ENCODE measurements at regions of chr12 and their contacts with region 1.

Region 1: DNA sequence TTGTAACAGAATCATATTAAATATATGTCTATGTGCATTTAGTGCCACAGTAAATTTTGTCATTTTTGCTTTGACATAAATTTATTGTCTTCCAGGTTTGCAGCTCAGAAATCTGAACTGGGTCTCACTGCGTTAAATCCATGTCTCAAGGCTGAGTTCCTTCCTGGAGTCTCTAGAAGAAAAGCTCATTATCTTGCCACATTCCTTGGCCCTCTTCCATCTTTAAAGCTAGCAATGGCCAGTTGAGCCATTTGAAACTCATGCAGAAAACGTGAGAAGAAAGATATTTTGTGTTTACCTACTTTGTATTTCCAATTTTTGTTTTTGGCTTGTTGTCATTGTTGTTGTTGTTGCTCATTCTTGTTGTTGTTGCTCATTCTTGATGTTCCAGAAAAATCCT is 10.7 kb downstream of the PRH1 start:
- DNase-seq: no peak
- H3K4me3 ChIP-seq: no peak overlapping the region
- H3K27ac ChIP-seq: no peak overlapping the region
- H3K4me1 ChIP-seq: no peaks in the 10 kb centered on the region
- H3K27me3 ChIP-seq: no peaks in the 10 kb centered on the region
- CTCF ChIP-seq: no peak

Region 2: DNA sequence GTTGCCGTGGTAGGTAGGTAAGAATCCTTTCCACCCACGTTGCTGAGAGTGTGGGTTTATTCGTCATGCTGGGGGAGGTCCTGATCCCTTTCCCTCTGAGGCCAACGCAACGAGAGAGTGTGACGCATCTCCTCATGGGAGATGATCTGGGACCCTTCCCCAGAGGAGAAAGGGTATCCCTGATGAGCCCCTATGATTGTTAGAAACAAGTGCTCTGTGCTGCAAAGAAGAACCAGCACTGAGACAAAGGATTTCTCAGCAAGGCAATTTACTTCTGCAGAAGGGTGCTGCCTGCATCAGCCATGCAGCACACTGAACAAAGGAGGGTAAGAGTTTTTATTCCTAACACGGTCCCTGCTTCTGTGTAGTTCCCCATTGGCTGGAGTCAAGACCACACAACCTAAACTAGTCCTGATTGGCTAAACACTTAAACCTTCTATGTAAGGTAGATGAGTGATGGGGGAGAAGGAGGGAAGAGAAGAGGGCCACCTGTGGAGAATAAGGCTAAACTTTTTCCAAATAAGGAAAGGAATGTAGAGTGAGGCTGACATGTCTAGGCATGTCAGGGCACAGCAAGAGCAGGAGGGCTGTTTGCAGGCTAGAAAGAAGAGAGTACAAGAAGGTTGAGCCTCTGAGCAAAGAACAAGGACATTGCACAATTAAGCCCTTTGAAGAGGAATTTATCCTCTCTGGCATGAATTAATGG is 962.5 kb before region 1 on chr12:
- CTCF ChIA-PET with region 1: no interaction called
- dilution Hi-C with region 1: no loop called
- in situ Hi-C with region 1: no loop called
- intact Hi-C with region 1: no loop called
- DNase-seq: peak; percentile 7
- H3K4me3 ChIP-seq: no peak overlapping the region
- H3K27ac ChIP-seq: no peak overlapping the region
- H3K4me1 ChIP-seq: no peaks in the 10 kb centered on the region
- H3K27me3 ChIP-seq: no peaks in the 10 kb centered on the region
- CTCF ChIP-seq: no peak

Region 3: GRCh38 chr12:10794222-10794621 is 79.2 kb before region 1 on chr12:
- CTCF ChIA-PET with region 1: no interaction called
- dilution Hi-C with region 1: loop called (anchors 5 kb)
- in situ Hi-C with region 1: no loop called
- intact Hi-C with region 1: loop called (anchors 10 kb)
- DNase-seq: no peak
- H3K4me3 ChIP-seq: no peak overlapping the region
- H3K27ac ChIP-seq: no peak overlapping the region
- H3K4me1 ChIP-seq: no peaks in the 10 kb centered on the region
- H3K27me3 ChIP-seq: peaks cover 8% of the 10 kb centered on the region
- CTCF ChIP-seq: no peak

Region 4: GRCh38 chr12:11067514-11067913 is 194.1 kb after region 1 on chr12:
- CTCF ChIA-PET with region 1: no interaction called
- dilution Hi-C with region 1: no loop called
- in situ Hi-C with region 1: no loop called
- intact Hi-C with region 1: loop called (anchors 10 kb)
- DNase-seq: peak; percentile 17
- H3K4me3 ChIP-seq: no peak overlapping the region
- H3K27ac ChIP-seq: no peak overlapping the region
- H3K4me1 ChIP-seq: no peaks in the 10 kb centered on the region
- H3K27me3 ChIP-seq: no peaks in the 10 kb centered on the region
- CTCF ChIP-seq: no peak

Measured in mammary epithelial cell (primary cell).